ENCODE measurements at regions of chr19 and their contacts with region 1.

Region 1: GRCh38 chr19:11558881-11559828 is at the start of gene ELOF1:
- DNase-seq: peak; percentile 98
- ATAC-seq: peak; percentile 96
- H3K4me3 Mint-ChIP-seq: peak within 1 kb of the TSS; percentile 98
- H3K27ac Mint-ChIP-seq: peak within 1 kb of the TSS; percentile 85
- H3K4me1 Mint-ChIP-seq: peaks cover 45% of the 10 kb centered on the region
- H3K27me3 Mint-ChIP-seq: no peaks in the 10 kb centered on the region
- total RNA-seq, gene ELOF1: 47.9 to 52.8 TPM

Region 2: GRCh38 chr19:11489378-11489777 is 69.8 kb before region 1 on chr19:
- CTCF ChIA-PET with region 1: no interaction called
- POLR2A ChIA-PET with region 1: no interaction called
- DNase-seq: no peak
- ATAC-seq: no peak
- H3K4me3 Mint-ChIP-seq: no peak overlapping the region
- H3K27ac Mint-ChIP-seq: no peak overlapping the region
- H3K4me1 Mint-ChIP-seq: no peaks in the 10 kb centered on the region
- H3K27me3 Mint-ChIP-seq: no peaks in the 10 kb centered on the region

Region 3: DNA sequence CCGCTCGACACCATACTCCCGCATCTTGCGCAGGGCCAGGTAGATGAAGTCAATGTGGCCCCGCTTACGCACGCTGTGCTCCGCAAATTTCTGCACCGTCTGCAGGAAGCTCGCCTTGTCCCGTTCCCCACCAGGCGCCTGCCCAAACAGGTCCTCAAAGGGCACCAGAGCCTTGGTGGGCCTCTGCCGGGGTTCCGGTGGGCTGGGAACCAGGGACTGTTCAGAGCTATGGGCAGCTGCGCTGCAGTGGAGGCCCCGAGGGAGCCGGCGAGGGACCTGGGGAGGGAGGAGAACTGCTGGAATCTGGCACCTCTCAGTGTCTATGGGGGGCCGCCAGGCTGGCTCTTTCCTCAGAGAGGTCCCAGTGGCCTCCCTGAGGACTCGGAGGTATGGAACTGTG is 45.2 kb before region 1 on chr19:
- CTCF ChIA-PET with region 1: no interaction called
- POLR2A ChIA-PET with region 1: no interaction called
- DNase-seq: no peak
- ATAC-seq: no peak
- H3K4me3 Mint-ChIP-seq: no peak overlapping the region
- H3K27ac Mint-ChIP-seq: no peak overlapping the region
- H3K4me1 Mint-ChIP-seq: no peaks in the 10 kb centered on the region
- H3K27me3 Mint-ChIP-seq: no peaks in the 10 kb centered on the region

Region 4: GRCh38 chr19:11535792-11536595 is 23.2 kb before region 1 on chr19:
- CTCF ChIA-PET with region 1: interaction called, 23 read pairs
- POLR2A ChIA-PET with region 1: no interaction called
- DNase-seq: peak; percentile 86
- ATAC-seq: peak; percentile 87
- H3K4me3 Mint-ChIP-seq: peak overlapping the region; percentile 10
- H3K27ac Mint-ChIP-seq: no peak overlapping the region
- H3K4me1 Mint-ChIP-seq: peaks cover 12% of the 10 kb centered on the region
- H3K27me3 Mint-ChIP-seq: peaks cover 16% of the 10 kb centered on the region

Region 5: DNA sequence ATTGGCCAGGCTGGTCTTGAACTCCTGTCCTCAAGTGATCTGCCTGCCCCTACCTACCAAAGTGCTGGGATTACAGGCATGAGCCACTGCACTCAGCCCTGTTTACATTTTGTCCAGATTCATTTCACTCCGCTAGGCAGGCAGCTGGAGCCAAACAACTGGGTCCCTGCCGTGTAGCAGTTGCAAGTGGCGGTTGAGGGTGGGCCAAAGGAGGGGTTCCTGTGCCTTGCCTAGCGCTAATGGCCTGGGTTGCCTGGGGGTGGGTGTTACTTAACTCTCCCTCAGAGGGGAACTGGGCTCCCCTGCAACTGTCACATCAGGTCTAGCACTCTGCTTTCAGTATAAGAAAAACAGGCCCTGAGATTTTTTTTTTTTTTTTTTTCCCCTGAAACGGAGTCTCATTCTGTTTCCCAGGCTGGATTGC is 10.9 kb after region 1 on chr19:
- CTCF ChIA-PET with region 1: interaction called, 14 read pairs
- POLR2A ChIA-PET with region 1: no interaction called
- DNase-seq: no peak
- ATAC-seq: no peak
- H3K4me3 Mint-ChIP-seq: no peak overlapping the region
- H3K27ac Mint-ChIP-seq: no peak overlapping the region
- H3K4me1 Mint-ChIP-seq: peaks cover 22% of the 10 kb centered on the region
- H3K27me3 Mint-ChIP-seq: no peaks in the 10 kb centered on the region

Region 6: GRCh38 chr19:11581740-11582139 is 22.6 kb after region 1 on chr19:
- CTCF ChIA-PET with region 1: interaction called, 187 read pairs
- POLR2A ChIA-PET with region 1: interaction called, 15 read pairs
- DNase-seq: peak; percentile 55
- ATAC-seq: peak; percentile 77
- H3K4me3 Mint-ChIP-seq: peak overlapping the region; percentile 54
- H3K27ac Mint-ChIP-seq: peak overlapping the region; percentile 95
- H3K4me1 Mint-ChIP-seq: peaks cover 43% of the 10 kb centered on the region
- H3K27me3 Mint-ChIP-seq: no peaks in the 10 kb centered on the region

Region 7: GRCh38 chr19:11587302-11587974 is 28.3 kb after region 1 on chr19:
- CTCF ChIA-PET with region 1: interaction called, 187 read pairs
- POLR2A ChIA-PET with region 1: interaction called, 15 read pairs
- DNase-seq: peak; percentile 87
- ATAC-seq: peak; percentile 86
- H3K4me3 Mint-ChIP-seq: no peak overlapping the region
- H3K27ac Mint-ChIP-seq: no peak overlapping the region
- H3K4me1 Mint-ChIP-seq: peaks cover 20% of the 10 kb centered on the region
- H3K27me3 Mint-ChIP-seq: no peaks in the 10 kb centered on the region

Region 8: GRCh38 chr19:11612816-11613511 is 53.8 kb after region 1 on chr19:
- CTCF ChIA-PET with region 1: no interaction called
- POLR2A ChIA-PET with region 1: no interaction called
- DNase-seq: no peak
- ATAC-seq: no peak
- H3K4me3 Mint-ChIP-seq: no peak overlapping the region
- H3K27ac Mint-ChIP-seq: peak overlapping the region; percentile 61
- H3K4me1 Mint-ChIP-seq: peaks cover 3% of the 10 kb centered on the region
- H3K27me3 Mint-ChIP-seq: no peaks in the 10 kb centered on the region